ENCODE measurements at regions of chr11 and their contacts with region 1.

Region 1: GRCh38 chr11:46238967-46239800 is 38.3 kb upstream of the CREB3L1 start:
- DNase-seq: peak; percentile 78 to 92 (median 82)
- ATAC-seq: peak; percentile 75
- H3K4me3 ChIP-seq: peak overlapping the region; percentile 35
- H3K27ac ChIP-seq: peak overlapping the region; percentile 97
- H3K4me1 ChIP-seq: peaks cover 45 to 51% of the 10 kb centered on the region in 2 experiments
- H3K27me3 ChIP-seq: no peaks in the 10 kb centered on the region
- CTCF ChIP-seq: peak; percentile 95 to 96 (median 95)
- EP300 ChIP-seq: 0 out of 2 replicates have a peak, but pooled peaks have one; percentile 16
- POLR2A ChIP-seq: 0 out of 2 replicates have a peak, but pooled peaks have one; percentile 10
- RAD21 ChIP-seq: peak; percentile 92

Region 2: GRCh38 chr11:45993531-45994001 is 245.6 kb before region 1 on chr11:
- CTCF ChIA-PET with region 1: no interaction called
- POLR2A ChIA-PET with region 1: interaction called, 10 read pairs
- in situ Hi-C with region 1: no loop called
- intact Hi-C with region 1: loop called (anchors 5 kb)
- DNase-seq: peak; percentile 45 to 86 (median 52)
- ATAC-seq: peak; percentile 46
- H3K4me3 ChIP-seq: peak overlapping the region; percentile 7; the same call in 1 of the 2 replicates
- H3K27ac ChIP-seq: peak overlapping the region; percentile 98
- H3K4me1 ChIP-seq: peaks cover 24 to 72% of the 10 kb centered on the region in 2 experiments
- H3K27me3 ChIP-seq: no peaks in the 10 kb centered on the region
- CTCF ChIP-seq: no peak
- EP300 ChIP-seq: peak; percentile 77
- POLR2A ChIP-seq: no peak
- RAD21 ChIP-seq: no peak

Region 3: GRCh38 chr11:46170797-46171196 is 68.4 kb before region 1 on chr11:
- CTCF ChIA-PET with region 1: no interaction called
- POLR2A ChIA-PET with region 1: no interaction called
- in situ Hi-C with region 1: no loop called
- intact Hi-C with region 1: no loop called
- DNase-seq: no peak
- ATAC-seq: no peak
- H3K4me3 ChIP-seq: no peak overlapping the region
- H3K27ac ChIP-seq: no peak overlapping the region
- H3K4me1 ChIP-seq: no peaks in the 10 kb centered on the region; a peak in 1 of 5 replicates
- H3K27me3 ChIP-seq: no peaks in the 10 kb centered on the region; a peak in 1 of 5 replicates
- CTCF ChIP-seq: no peak
- EP300 ChIP-seq: no peak
- POLR2A ChIP-seq: no peak
- RAD21 ChIP-seq: no peak

Region 4: GRCh38 chr11:46210133-46210636 is 29.0 kb before region 1 on chr11:
- CTCF ChIA-PET with region 1: no interaction called
- POLR2A ChIA-PET with region 1: interaction called, 4 read pairs
- in situ Hi-C with region 1: no loop called
- intact Hi-C with region 1: loop called (anchors 2 kb)
- DNase-seq: peak in 2 of 4 experiments; percentile 49 to 52
- ATAC-seq: peak; percentile 74
- H3K4me3 ChIP-seq: no peak overlapping the region
- H3K27ac ChIP-seq: peak overlapping the region; percentile 36; the same call in 2 of the 3 replicates
- H3K4me1 ChIP-seq: peaks cover 0 to 11% of the 10 kb centered on the region in 2 experiments; a peak in 3 of 5 replicates
- H3K27me3 ChIP-seq: no peaks in the 10 kb centered on the region
- CTCF ChIP-seq: no peak
- EP300 ChIP-seq: no peak
- POLR2A ChIP-seq: no peak
- RAD21 ChIP-seq: no peak

Region 5: GRCh38 chr11:46278387-46279125 is 39.4 kb after region 1 on chr11:
- CTCF ChIA-PET with region 1: no interaction called
- POLR2A ChIA-PET with region 1: interaction called, 8 read pairs
- in situ Hi-C with region 1: no loop called
- intact Hi-C with region 1: loop called (anchors 2 kb)
- DNase-seq: peak; percentile 84 to 88 (median 86)
- ATAC-seq: peak; percentile 85
- H3K4me3 ChIP-seq: peak overlapping the region; percentile 72
- H3K27ac ChIP-seq: peak overlapping the region; percentile 69
- H3K4me1 ChIP-seq: peaks cover 56 to 61% of the 10 kb centered on the region in 2 experiments
- H3K27me3 ChIP-seq: no peaks in the 10 kb centered on the region
- CTCF ChIP-seq: peak; percentile 74 to 90 (median 89)
- EP300 ChIP-seq: no peak
- POLR2A ChIP-seq: peak; percentile 54
- RAD21 ChIP-seq: peak; percentile 43 to 69

Region 6: GRCh38 chr11:46308631-46309419 is 69.6 kb after region 1 on chr11:
- CTCF ChIA-PET with region 1: interaction called, 19 read pairs
- POLR2A ChIA-PET with region 1: interaction called, 12 read pairs
- in situ Hi-C with region 1: loop called (anchors 10 kb)
- intact Hi-C with region 1: no loop called
- DNase-seq: peak; percentile 83 to 88 (median 84)
- ATAC-seq: peak; percentile 92
- H3K4me3 ChIP-seq: no peak overlapping the region
- H3K27ac ChIP-seq: peak overlapping the region; percentile 75; the same call in 2 of the 3 replicates
- H3K4me1 ChIP-seq: peaks cover 17 to 45% of the 10 kb centered on the region in 2 experiments
- H3K27me3 ChIP-seq: no peaks in the 10 kb centered on the region
- CTCF ChIP-seq: peak; percentile 87 to 96 (median 91)
- EP300 ChIP-seq: no peak
- POLR2A ChIP-seq: no peak
- RAD21 ChIP-seq: peak; percentile 84 to 90